Spleen (tissue), 13 donors: ENCODE measurements at regions of chr11 and their contacts with region 1.

Region 1: DNA sequence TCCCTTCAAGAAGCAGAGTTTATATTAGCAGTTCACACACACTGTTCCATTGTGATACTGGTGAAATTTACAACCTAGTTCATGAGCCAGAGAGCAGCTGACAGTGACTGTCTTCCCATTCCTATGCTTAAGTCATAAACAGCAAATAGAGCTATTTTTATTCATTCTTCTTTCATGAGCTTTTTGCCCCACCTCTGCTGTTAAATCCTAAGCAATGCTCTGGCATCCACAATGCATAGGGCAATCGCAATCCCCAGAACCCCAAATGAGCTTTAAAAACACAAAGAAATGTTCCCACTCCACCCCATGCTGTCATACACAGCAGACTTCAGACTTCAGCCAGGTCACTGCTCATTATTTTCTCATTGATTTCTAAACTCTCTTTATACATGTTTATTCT is 307.5 kb downstream of the ETS1 start:
- DNase-seq: no peak
- H3K4me3 ChIP-seq: no peak overlapping the region
- H3K27ac ChIP-seq: no peak overlapping the region
- H3K4me1 ChIP-seq: peaks cover 0 to 5% (median 0%) of the 10 kb centered on the region in 6 donors
- H3K27me3 ChIP-seq: no peaks in the 10 kb centered on the region
- CTCF ChIP-seq: no peak
- POLR2A ChIP-seq: no peak

Region 2: GRCh38 chr11:128210148-128210940 is 69.5 kb before region 1 on chr11:
- intact Hi-C with region 1: loop called (anchors 10 kb)
- DNase-seq: no peak
- H3K4me3 ChIP-seq: no peak overlapping the region
- H3K27ac ChIP-seq: no peak overlapping the region
- H3K4me1 ChIP-seq: peaks cover 0 to 6% (median 0%) of the 10 kb centered on the region in 6 donors
- H3K27me3 ChIP-seq: no peaks in the 10 kb centered on the region
- CTCF ChIP-seq: no peak
- POLR2A ChIP-seq: no peak